Activated B cell treated with CpG ODN at 0.5 μM for 24 hours (primary cell): ENCODE measurements at regions of chr19 and their contacts with region 1.

Region 1: GRCh38 chr19:21505459-21506451 is at the start of gene ZNF429:
- DNase-seq: peak; percentile 73
- ATAC-seq: peak; percentile 99
- H3K4me3 Mint-ChIP-seq: peak within 1 kb of the TSS; percentile 100
- H3K27ac Mint-ChIP-seq: peak within 1 kb of the TSS; percentile 99
- H3K4me1 Mint-ChIP-seq: peaks cover 38% of the 10 kb centered on the region
- H3K27me3 Mint-ChIP-seq: no peaks in the 10 kb centered on the region
- CTCF ChIP-seq: no peak
- total RNA-seq, gene ZNF429: 19.5 and 19.9 TPM in 2 replicates

Region 2: DNA sequence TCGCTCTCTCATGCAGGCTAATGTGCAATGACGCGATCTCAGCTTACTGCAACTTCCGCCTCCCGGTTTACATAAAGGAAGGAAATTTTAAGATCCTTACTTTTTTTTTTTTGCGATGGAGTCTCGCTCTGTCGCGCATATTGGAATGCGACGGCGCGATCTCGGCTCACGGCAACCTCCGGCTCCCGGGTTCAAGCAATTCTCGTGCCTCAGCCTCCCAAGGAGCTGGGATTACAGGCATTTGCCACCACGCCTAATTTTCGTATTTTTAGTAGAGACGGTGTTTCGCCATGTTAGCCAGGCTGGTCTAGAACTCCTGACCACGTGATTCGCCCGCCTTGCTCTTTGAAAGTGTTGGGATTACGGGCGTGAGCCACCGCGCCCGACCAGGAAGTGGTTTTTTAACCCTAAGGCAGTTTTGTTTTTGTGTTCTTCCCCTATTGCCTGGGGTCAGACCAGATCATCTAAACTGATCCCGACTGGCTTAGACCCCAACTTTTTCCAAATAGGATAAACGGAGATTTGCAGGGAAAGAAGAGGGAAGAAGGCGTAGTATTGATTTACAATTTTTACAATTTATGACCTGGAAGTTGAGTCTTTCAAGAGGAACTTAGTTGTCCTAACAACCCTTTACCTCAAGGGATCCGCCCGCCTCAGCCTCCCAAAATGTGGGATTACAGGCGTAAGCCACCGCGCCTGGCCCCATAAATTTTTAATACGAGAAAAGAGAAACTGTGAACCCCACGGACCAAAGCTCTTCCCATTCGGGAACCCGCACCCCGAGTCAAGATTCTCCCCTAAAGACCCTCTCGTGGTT is 1082.2 kb before region 1 on chr19:
- CTCF ChIA-PET with region 1: no interaction called
- POLR2A ChIA-PET with region 1: interaction called, 8 read pairs
- intact Hi-C with region 1: loop called (anchors 5 kb)
- DNase-seq: peak; percentile 24
- ATAC-seq: no peak
- H3K4me3 Mint-ChIP-seq: peak overlapping the region; percentile 99
- H3K27ac Mint-ChIP-seq: peak overlapping the region; percentile 98
- H3K4me1 Mint-ChIP-seq: peaks cover 15% of the 10 kb centered on the region
- H3K27me3 Mint-ChIP-seq: no peaks in the 10 kb centered on the region
- CTCF ChIP-seq: no peak

Region 3: GRCh38 chr19:20776083-20777076 is 729.4 kb before region 1 on chr19 and contains the start of gene ZNF66:
- CTCF ChIA-PET with region 1: no interaction called
- POLR2A ChIA-PET with region 1: interaction called, 5 read pairs
- intact Hi-C with region 1: loop called (anchors 10 kb)
- DNase-seq: peak; percentile 85
- ATAC-seq: peak; percentile 98
- H3K4me3 Mint-ChIP-seq: peak within 1 kb of the TSS; percentile 98
- H3K27ac Mint-ChIP-seq: peak within 1 kb of the TSS; percentile 91
- H3K4me1 Mint-ChIP-seq: peaks cover 10% of the 10 kb centered on the region
- H3K27me3 Mint-ChIP-seq: no peaks in the 10 kb centered on the region
- CTCF ChIP-seq: no peak
- total RNA-seq, gene ZNF66: 17.5 and 19.1 TPM in 2 replicates

Region 4: DNA sequence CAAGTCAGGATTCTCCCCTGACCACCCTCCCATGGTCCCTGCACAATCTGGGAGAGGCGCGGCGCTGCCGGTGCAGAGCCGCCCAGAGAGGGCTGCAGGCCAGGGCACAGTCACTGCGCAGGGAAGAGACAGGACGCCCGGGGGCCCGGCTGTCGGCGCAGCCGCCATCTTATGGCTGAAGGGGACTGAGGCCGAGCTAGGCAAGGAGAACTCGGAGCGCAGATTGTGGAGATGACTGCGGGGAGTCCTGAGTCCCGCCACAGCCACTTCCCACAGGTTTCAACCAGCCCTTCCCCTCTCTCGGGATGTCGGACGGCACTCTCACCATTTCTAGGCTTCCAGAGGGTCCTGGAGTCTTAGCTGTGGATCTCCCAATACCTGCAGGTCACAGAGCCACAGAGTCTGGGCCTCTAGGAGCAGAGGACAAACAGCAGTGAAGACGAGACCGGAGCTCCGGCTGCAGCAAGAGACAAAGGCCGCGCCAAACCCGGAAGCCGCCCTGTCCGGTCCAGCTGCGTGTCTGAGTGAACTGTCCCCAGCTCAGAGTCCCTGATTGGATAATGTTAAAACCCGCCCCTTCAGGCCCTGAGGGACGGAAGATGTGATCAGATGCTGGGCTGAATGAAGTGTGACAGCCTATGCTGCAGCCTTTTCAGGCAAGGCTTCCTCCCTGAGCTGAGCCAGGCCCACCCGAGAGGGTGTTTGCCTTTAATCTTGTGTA is 176.7 kb before region 1 on chr19 and contains the start of gene ZNF708:
- CTCF ChIA-PET with region 1: interaction called, 3 read pairs
- POLR2A ChIA-PET with region 1: interaction called, 32 read pairs
- intact Hi-C with region 1: loop called (anchors 2 kb)
- DNase-seq: peak; percentile 55
- ATAC-seq: peak; percentile 99
- H3K4me3 Mint-ChIP-seq: peak within 1 kb of the TSS; percentile 99
- H3K27ac Mint-ChIP-seq: peak within 1 kb of the TSS; percentile 99
- H3K4me1 Mint-ChIP-seq: peaks cover 39% of the 10 kb centered on the region
- H3K27me3 Mint-ChIP-seq: no peaks in the 10 kb centered on the region
- CTCF ChIP-seq: no peak
- total RNA-seq, gene ZNF708: 24.3 and 30.6 TPM in 2 replicates

Region 5: GRCh38 chr19:21423057-21424041 is 82.4 kb before region 1 on chr19:
- CTCF ChIA-PET with region 1: no interaction called
- POLR2A ChIA-PET with region 1: no interaction called
- intact Hi-C with region 1: no loop called
- DNase-seq: no peak
- ATAC-seq: no peak
- H3K4me3 Mint-ChIP-seq: no peak overlapping the region
- H3K27ac Mint-ChIP-seq: no peak overlapping the region
- H3K4me1 Mint-ChIP-seq: no peaks in the 10 kb centered on the region
- H3K27me3 Mint-ChIP-seq: no peaks in the 10 kb centered on the region
- CTCF ChIP-seq: no peak

Region 6: GRCh38 chr19:21568816-21569493 is 63.2 kb after region 1 on chr19:
- CTCF ChIA-PET with region 1: no interaction called
- POLR2A ChIA-PET with region 1: interaction called, 27 read pairs
- intact Hi-C with region 1: loop called (anchors 1 kb)
- DNase-seq: peak; percentile 58
- ATAC-seq: peak; percentile 94
- H3K4me3 Mint-ChIP-seq: peak overlapping the region; percentile 99
- H3K27ac Mint-ChIP-seq: peak overlapping the region; percentile 96
- H3K4me1 Mint-ChIP-seq: peaks cover 19% of the 10 kb centered on the region
- H3K27me3 Mint-ChIP-seq: no peaks in the 10 kb centered on the region
- CTCF ChIP-seq: no peak

Region 7: DNA sequence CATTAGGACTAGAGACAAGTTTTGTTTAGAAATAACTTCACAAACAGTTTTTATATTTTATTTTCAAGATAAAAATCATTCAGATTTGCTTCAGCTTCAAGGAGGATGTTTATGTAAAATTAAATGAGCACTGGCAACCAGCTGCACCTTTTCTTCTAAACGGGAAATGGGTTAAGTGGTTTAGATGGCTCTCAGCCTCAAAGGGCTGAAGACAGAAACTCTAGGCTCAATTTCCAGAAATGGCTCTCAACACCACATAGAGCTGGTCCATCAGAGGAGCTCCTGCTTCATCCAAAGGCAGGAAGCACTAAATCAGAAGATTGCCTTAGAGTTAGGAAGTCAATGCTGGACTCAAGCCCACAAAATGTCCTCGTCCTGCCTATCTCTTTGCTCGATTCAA is 74.3 kb after region 1 on chr19:
- CTCF ChIA-PET with region 1: no interaction called
- POLR2A ChIA-PET with region 1: no interaction called
- intact Hi-C with region 1: no loop called
- DNase-seq: no peak
- ATAC-seq: no peak
- H3K4me3 Mint-ChIP-seq: no peak overlapping the region
- H3K27ac Mint-ChIP-seq: no peak overlapping the region
- H3K4me1 Mint-ChIP-seq: no peaks in the 10 kb centered on the region
- H3K27me3 Mint-ChIP-seq: no peaks in the 10 kb centered on the region
- CTCF ChIP-seq: no peak

Region 8: GRCh38 chr19:22052644-22053013 is 546.9 kb after region 1 on chr19:
- CTCF ChIA-PET with region 1: no interaction called
- POLR2A ChIA-PET with region 1: interaction called, 3 read pairs
- intact Hi-C with region 1: loop called (anchors 10 kb)
- DNase-seq: no peak
- ATAC-seq: peak; percentile 43
- H3K4me3 Mint-ChIP-seq: peak overlapping the region; percentile 99
- H3K27ac Mint-ChIP-seq: peak overlapping the region; percentile 81
- H3K4me1 Mint-ChIP-seq: peaks cover 8% of the 10 kb centered on the region
- H3K27me3 Mint-ChIP-seq: no peaks in the 10 kb centered on the region
- CTCF ChIP-seq: no peak